ENCODE measurements at regions of chr17 and their contacts with region 1.

Region 1: DNA sequence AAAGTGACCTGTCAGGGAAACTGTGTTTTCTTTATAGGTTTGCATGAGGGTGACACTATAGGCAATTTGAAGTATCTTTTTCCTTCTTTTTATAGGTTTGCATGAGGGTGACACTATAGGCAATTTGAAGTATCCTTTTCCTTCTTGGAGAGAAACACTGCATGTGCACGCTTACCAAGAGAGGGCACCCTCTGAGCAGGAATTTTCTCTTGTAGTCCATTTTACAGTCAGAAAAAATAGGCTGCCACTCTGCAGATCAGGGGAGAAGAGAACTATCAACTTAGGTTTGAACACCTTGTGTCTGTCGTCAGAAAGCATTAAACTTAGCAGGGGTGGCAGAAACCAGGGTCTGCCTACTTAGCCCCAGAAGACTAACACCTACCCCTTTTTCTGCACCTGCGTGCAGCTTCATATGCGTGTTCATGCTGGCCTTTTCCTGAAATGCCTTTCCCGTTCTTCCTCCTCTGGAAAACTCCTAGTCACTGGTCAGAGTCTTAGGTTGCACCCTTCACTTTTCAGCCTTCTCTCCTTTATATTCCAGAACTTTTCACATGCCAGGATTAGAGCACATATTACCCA is 16.4 kb upstream of the SMIM36 start:
- DNase-seq: no peak
- ATAC-seq: peak; percentile 47

Region 2: DNA sequence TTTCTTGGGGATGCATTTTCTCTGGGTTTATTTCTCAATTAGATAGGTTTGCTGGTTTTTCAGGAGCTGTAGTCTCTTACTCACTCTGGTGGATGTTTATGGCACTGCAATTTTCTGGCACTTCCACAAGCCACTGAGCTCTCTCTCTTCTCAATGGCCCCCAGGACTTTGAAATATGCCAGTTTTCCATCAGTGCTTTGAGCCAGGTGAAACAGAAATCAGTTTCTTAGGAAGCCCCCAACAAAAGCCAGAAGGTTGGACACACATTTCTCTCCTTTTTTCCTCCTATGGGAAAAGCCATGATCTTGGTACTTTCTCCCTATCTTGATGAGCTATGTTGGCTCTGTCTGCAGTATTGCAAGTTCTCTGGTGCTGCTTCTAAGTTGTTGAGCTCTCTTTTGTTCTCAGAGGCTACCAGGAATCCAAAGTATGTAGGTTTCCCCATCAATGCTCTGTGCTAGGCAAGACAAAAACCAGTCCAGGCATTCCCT is 74.3 kb after region 1 on chr17:
- intact Hi-C with region 1: loop called in 1 of 2 experiments (anchors 5 kb)
- DNase-seq: no peak
- ATAC-seq: no peak

Region 3: GRCh38 chr17:55693254-55694216 is 165.9 kb after region 1 on chr17:
- intact Hi-C with region 1: no loop called
- DNase-seq: peak; percentile 25 to 28
- ATAC-seq: no peak

Region 4: GRCh38 chr17:55735731-55736405 is 208.2 kb after region 1 on chr17:
- intact Hi-C with region 1: loop called in 1 of 2 experiments (anchors 10 kb)
- DNase-seq: peak in 1 of 2 donors; percentile 36
- ATAC-seq: no peak

Region 5: DNA sequence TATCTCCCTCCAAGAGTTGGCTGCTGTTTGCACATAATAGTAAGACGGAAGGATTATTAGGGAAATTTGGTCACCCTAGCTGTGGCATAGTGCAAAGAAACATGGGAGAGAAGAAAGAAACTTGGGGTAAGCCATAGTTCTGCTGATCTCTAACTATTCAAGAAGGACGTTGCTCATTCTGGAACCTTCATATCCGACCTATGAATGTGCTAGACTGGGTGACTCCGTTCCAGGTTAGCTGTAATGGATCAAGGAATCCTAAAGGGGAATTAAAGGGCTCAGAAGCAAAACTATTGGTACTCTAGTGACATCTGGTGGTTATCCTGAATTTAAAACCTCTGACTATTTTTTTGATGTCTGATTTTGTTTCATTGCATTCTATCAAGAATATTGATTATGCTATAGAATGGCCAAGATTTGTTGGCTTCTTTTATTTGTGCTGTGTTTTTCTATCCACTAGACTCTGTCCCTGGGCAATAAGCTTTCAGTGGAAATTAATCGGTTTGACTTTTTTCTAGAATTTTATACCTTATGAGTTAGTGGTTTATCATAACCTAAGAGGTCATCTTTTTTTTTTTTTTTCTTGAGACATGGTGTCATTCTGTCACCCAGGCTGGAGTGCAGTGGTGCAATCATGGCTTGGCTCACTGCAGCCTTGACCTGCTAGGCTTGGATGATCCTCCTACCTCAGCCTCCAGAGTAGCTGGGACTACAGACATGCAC is 242.7 kb after region 1 on chr17:
- intact Hi-C with region 1: loop called in 1 of 2 experiments (anchors 2 kb)
- DNase-seq: no peak
- ATAC-seq: peak; percentile 61

Region 6: DNA sequence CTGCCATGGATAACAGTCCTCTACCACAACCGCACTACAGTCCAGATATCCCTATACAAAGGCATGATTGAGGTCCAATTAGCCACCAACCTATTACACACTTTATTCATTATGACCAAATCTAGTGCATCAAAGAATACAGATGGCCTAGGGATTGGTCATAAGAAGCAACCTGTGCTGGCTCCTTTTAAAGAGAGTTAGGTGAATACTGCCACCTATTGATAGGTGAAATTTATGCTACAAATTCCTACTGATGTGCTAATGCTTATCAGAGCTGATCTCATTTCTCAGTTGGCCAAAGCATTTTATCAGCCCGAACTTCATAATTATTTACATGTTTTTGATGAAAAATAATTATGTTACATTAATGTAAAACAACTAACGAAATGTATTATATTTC is 791.9 kb after region 1 on chr17:
- intact Hi-C with region 1: loop called in 1 of 2 experiments (anchors 10 kb)
- DNase-seq: no peak
- ATAC-seq: peak; percentile 62

Measured in left colon (tissue), 2 donors.